SK-N-SH (cell line): ENCODE measurements at regions of chr12 and their contacts with region 1.

Region 1: DNA sequence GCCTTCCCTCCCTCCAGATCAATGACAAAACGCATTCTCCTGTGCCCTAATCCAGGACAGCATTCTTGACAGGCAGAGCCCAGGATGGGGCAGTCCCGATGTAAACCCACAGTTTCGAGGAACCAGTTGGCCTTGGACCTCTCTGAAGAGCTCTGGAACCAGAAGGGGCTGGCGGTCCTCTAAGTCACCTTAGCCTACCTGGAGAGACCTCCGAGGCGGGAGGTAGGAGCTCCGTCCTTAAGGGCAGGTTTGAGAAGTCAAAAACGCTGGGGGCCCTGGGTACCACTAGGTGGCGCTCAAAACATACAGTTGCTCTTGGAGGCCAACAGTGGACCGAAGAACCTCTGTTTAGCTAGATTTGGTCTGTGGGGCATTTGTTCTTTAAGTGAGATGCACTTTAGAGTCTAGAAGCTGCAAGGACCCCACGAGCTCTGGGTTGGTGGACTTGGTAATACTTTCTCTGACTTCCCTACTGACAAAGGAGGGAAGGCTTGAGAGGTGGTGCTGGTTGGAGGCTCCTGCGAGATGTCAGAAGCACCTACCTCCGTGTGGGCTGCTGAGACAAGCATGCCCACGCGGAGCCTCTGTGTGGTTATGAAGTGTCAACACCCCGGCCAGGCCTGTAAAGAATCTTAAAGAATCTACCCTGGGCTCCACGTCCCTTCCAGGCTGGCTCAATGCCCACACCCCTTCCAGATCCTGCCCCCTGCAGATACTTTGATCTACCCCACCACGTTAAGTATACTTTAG is 74.8 kb upstream of the CHST11 start:
- DNase-seq: peak; percentile 78
- H3K4me3 ChIP-seq: peak overlapping the region in 1 of 2 experiments; percentile 3; a peak in 1 of 4 replicates
- H3K27ac ChIP-seq: no peak overlapping the region
- H3K4me1 ChIP-seq: peaks cover 0 to 1% of the 10 kb centered on the region in 2 experiments; a peak in 1 of 4 replicates
- H3K27me3 ChIP-seq: no peaks in the 10 kb centered on the region
- CTCF ChIP-seq: peak; percentile 98
- EP300 ChIP-seq: no peak
- RAD21 ChIP-seq: peak; percentile 97

Region 2: DNA sequence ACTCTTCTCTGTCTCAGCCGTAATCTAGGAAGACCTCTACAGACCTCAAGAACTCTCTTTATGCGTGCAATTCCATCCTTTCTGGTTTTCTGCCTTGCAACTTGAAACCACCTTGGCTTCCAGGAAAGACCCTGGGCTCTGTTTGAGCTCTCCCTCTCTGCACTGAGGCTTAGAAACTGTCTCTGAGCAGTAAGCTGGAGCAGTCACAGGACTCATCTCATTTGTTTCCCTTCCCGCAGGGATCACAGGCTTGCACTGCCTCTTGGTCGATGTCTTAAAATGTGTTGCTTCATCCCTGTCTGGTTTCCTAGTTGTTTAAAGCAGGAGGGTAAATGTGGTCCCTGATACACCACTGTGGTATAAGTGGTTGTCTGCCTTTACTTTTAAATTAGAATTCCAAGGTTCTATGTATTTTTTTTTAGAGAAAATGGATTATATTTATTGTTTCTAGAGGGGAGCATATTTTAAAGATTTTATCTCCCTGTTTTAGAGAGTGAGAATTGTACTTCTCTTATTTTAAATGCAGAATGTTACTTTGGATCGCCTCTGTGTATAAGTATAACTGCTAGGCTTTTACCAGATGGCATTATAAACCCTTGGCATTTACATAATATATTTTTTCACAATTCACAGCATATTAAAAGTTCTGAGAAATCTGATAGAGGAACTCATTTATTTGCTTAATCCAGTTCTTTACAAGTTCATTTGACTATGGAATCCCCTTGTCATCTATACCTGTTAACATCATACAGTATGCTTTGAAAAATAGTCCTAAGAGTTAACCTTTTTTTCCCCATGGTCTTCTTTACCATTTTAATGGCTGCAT is 52.0 kb before region 1 on chr12:
- CTCF ChIA-PET with region 1: no interaction called
- POLR2A ChIA-PET with region 1: no interaction called
- DNase-seq: no peak
- H3K4me3 ChIP-seq: no peak overlapping the region
- H3K27ac ChIP-seq: no peak overlapping the region
- H3K4me1 ChIP-seq: no peaks in the 10 kb centered on the region
- H3K27me3 ChIP-seq: no peaks in the 10 kb centered on the region
- CTCF ChIP-seq: no peak
- EP300 ChIP-seq: no peak
- RAD21 ChIP-seq: no peak

Region 3: DNA sequence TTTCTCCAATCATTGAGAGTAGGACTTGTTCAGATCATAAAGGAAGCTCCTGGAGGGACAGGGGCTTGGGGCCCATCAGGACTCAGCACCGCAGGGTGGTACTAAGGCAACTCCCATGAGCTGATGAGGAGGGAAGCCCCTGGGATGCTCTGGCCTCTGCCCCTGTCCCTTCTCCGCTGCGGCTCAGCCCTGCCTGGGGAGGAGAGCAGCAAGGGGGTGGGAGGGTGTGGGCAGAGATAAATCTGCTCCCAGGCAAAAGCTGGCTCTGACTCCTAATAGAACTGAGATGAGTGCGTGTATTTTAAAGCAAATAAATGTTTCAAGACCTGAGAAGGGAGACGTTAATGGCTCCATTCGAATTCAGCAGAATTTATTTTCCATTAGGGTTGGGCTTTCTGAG is 22.9 kb after region 1 on chr12:
- CTCF ChIA-PET with region 1: interaction called, 10 read pairs
- POLR2A ChIA-PET with region 1: no interaction called
- DNase-seq: no peak
- H3K4me3 ChIP-seq: no peak overlapping the region
- H3K27ac ChIP-seq: no peak overlapping the region
- H3K4me1 ChIP-seq: peaks cover 0 to 12% of the 10 kb centered on the region in 2 experiments; a peak in 2 of 4 replicates
- H3K27me3 ChIP-seq: no peaks in the 10 kb centered on the region
- CTCF ChIP-seq: no peak
- EP300 ChIP-seq: no peak
- RAD21 ChIP-seq: no peak

Region 4: DNA sequence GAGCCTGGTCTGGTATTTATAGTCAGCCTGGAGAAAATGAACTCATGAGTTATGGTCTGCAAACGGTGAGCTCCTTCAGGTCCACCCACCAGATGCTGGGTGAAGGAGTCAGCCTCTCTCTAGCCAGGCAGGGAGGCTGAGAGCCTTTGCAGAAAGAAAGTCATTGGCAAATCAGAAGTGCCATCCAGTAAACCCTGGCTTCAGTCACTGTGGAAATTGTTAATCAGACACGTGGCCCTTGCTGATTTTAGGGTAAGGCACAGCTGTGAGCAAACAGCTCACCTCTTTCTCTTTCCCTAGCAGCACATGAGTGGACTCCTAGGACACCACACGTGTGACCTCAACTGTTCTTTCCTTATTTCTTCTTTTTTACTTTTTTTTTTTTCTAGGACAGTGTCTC is 119.8 kb after region 1 on chr12:
- CTCF ChIA-PET with region 1: interaction called, 10 read pairs
- POLR2A ChIA-PET with region 1: no interaction called
- DNase-seq: no peak
- H3K4me3 ChIP-seq: no peak overlapping the region
- H3K27ac ChIP-seq: no peak overlapping the region
- H3K4me1 ChIP-seq: peaks cover 0 to 30% of the 10 kb centered on the region in 2 experiments; a peak in 2 of 4 replicates
- H3K27me3 ChIP-seq: no peaks in the 10 kb centered on the region
- CTCF ChIP-seq: no peak
- EP300 ChIP-seq: no peak
- RAD21 ChIP-seq: no peak

Region 5: DNA sequence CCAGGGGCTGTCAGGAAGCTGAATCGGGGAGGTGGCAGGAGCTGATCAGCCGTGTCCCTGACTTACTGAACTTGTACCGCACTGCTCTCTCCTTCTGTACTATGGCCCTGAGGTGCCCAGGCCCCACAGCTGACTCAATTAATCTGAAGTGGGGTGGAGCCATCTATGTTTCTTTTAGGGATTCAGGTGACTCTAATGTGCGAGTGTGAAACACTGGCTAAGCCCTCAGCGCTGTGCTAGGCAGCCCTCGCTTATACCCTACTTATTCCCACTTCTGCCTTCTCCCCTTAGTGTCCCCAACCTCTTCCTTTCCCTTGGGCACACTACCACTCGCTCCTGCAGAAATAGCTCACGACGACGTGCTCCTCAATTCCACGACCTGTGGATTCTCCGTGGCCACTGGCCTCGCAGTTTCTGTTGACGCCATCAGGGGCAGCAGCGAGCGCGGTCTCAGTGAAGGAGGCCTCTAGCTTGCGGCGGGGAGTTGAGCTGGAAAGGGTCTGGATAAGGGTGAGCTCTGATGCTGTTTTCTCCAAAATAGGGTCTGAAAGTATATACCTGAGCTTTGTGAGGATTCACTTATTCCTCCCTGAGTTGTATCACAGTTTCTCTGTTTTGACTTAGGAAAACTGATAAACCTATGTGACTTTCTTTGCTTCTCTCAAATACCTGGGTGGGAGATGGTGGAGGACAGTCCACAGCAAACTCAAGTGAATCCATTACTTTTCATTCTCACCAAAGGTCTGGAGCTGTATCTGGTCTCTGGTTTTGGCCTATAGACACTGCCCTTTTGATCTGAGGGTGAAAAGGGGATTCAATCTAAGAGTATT is 408.6 kb after region 1 on chr12:
- CTCF ChIA-PET with region 1: interaction called, 12 read pairs
- POLR2A ChIA-PET with region 1: no interaction called
- DNase-seq: peak; percentile 50
- H3K4me3 ChIP-seq: no peak overlapping the region
- H3K27ac ChIP-seq: no peak overlapping the region
- H3K4me1 ChIP-seq: peaks cover 4 to 5% of the 10 kb centered on the region in 2 experiments; a peak in 2 of 4 replicates
- H3K27me3 ChIP-seq: no peaks in the 10 kb centered on the region
- CTCF ChIP-seq: peak; percentile 60
- EP300 ChIP-seq: no peak
- RAD21 ChIP-seq: peak; percentile 50

Region 6: DNA sequence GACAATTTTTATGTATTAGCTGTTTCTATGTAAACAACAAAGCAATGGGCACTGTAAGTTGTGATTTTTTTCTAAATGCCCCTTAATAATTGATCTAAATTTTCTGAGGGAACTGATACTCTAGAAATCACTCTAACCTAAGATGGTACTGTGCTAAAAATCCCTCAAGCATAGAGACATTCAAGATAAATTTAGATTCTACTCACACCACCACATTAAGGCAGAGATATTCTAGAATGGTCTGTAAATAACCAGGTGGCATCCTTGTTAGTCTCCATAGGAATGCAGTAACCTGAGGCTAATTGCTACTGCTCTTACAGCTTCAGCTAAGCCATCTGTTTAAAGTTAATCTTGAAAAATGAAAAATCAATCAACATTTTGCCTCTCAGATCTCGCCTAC is 488.9 kb after region 1 on chr12:
- CTCF ChIA-PET with region 1: interaction called, 33 read pairs
- POLR2A ChIA-PET with region 1: no interaction called
- DNase-seq: no peak
- H3K4me3 ChIP-seq: no peak overlapping the region
- H3K27ac ChIP-seq: no peak overlapping the region
- H3K4me1 ChIP-seq: peaks cover 0 to 3% of the 10 kb centered on the region in 2 experiments; a peak in 2 of 4 replicates
- H3K27me3 ChIP-seq: no peaks in the 10 kb centered on the region
- CTCF ChIP-seq: no peak
- EP300 ChIP-seq: no peak
- RAD21 ChIP-seq: no peak

Region 7: DNA sequence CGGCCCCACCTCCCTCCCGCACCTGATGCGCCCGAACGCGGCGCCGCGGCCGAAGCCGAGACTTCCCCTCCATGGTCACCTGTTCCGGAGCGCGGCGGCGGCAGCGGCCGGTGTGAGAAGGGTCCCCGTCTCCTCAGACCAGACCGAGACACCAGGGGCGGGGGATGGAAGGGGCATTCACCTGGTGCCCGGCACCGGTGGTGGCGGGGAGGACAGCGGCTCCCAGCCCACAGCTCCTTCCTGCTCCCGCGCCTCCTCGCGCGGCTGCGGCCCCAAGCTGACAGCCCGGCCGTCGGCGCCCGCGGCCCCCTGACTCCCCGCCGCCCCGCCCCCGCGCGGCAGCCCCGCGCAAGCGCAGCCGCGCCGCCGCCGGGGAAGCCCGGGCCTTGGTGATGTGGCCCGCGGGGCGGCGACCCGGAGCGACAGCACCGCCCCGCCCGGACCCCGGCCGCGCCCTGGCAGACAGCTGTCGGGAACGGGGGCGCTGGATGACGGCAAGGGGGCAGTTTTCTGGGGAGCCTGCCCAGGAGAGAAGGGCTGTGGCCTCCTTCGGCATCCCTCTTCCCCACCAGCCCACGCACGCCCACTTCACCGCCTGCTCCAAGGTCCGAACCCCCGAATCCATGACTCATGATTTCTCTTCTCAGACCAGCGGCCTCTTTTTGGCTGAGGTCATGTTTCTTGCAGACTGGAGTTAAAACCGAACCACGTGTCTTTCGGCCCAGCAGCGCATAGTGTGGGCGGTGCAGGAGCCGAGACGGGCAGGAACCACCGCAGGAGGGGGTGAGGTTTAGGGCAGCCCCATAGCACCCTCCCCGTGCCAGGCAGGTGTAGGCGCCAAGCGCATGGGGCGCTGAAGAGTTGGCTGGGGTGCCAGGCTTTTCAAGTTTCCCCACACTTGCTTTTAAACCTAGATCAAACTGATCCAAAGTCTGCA is 576.4 kb after region 1 on chr12 and contains the start of gene SLC41A2:
- CTCF ChIA-PET with region 1: interaction called, 20 read pairs
- POLR2A ChIA-PET with region 1: no interaction called
- DNase-seq: peak; percentile 98
- H3K4me3 ChIP-seq: peak within 1 kb of the TSS; percentile 81 to 83
- H3K27ac ChIP-seq: peak within 1 kb of the TSS; percentile 77 to 88
- H3K4me1 ChIP-seq: peaks cover 6 to 17% of the 10 kb centered on the region in 2 experiments; a peak in 3 of 4 replicates
- H3K27me3 ChIP-seq: no peaks in the 10 kb centered on the region
- CTCF ChIP-seq: no peak; the same call in 1 of the 2 replicates
- EP300 ChIP-seq: no peak
- RAD21 ChIP-seq: no peak
- polyA plus RNA-seq, gene SLC41A2: 1.7 and 3.1 TPM in 2 replicates

Region 8: DNA sequence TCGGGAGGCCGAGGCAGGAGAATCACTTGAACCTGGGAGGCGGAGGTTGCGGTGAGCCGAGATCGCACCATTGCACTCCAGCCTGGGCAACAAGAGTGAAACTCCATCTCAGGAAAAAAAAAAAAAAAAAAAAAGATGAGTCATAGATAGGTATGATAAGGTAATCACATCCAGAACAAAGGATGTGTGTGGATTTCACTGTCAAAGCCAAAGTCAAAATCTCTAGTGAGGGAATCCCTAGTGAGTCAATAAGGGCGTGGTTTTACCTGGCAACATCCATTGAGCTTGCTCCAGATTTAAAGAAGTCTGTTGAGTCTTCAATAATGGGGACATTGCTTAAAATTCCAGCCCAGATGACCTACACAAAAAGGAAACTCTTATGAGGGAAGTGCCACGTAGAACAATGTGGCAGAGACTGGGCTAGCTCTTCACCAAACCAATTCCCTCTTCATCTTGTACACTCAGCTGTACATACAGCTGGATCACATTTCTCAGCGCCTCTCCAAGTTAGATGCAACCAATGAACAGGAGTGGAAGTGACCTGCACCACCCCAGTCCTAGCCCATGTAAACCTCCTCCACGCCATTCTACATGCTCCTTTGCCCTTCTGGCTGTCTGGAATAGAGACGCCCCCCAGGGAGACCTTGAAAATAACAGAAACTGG is 678.9 kb after region 1 on chr12:
- CTCF ChIA-PET with region 1: interaction called, 34 read pairs
- POLR2A ChIA-PET with region 1: no interaction called
- DNase-seq: no peak
- H3K4me3 ChIP-seq: no peak overlapping the region
- H3K27ac ChIP-seq: no peak overlapping the region
- H3K4me1 ChIP-seq: no peaks in the 10 kb centered on the region
- H3K27me3 ChIP-seq: no peaks in the 10 kb centered on the region
- CTCF ChIP-seq: no peak
- EP300 ChIP-seq: no peak
- RAD21 ChIP-seq: no peak